H1 (cell line): ENCODE measurements at regions of chr6 and their contacts with region 1.

Region 1: GRCh38 chr6:1786455-1787453 is 177.0 kb downstream of the FOXC1 start:
- DNase-seq: no peak
- H3K4me3 ChIP-seq: no peak overlapping the region
- H3K27ac ChIP-seq: no peak overlapping the region
- H3K4me1 ChIP-seq: no peaks in the 10 kb centered on the region
- H3K27me3 ChIP-seq: no peaks in the 10 kb centered on the region
- CTCF ChIP-seq: no peak
- EP300 ChIP-seq: no peak
- POLR2A ChIP-seq: no peak
- RAD21 ChIP-seq: no peak

Region 2: DNA sequence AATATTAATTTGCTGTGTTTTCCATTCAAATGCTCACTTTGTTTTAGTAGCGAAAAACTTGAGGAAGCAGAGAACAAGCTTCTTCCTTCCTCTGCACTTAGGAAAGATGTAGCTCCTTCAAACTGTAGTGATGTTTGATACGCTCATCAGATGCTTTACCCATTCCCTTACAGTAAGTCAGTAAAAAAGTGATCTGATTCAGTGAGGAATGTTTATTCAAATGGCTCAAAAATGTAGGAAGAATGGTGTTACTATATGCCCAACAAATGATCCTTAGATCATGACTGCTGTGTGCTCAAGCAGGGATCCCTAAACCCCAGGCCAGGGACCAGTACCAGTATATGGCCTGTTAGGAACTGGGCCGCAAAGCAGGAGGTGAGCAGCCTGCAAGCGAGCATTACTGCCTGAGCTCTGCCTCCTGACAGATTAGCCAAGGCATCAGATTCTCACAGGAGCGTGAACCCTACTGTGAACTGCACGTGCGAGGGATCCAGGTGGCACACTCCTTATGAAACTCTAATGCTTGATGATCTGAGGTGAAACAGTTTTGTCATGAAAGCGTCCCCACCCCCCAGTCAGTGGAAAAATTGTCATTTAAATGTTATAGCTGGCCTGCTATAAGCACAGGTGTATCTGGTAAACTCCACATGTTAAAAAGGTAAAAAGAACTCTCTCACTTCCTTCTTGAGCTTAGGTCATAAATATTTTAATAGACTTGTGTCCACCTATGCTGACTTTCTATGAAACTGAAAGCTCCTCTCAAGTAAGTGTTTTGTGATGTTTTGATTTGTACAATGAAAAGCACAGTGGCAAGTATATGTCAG is 10.2 kb after region 1 on chr6:
- CTCF ChIA-PET with region 1: interaction called, 10 read pairs
- POLR2A ChIA-PET with region 1: interaction called, 3 read pairs
- DNase-seq: no peak
- H3K4me3 ChIP-seq: no peak overlapping the region
- H3K27ac ChIP-seq: no peak overlapping the region
- H3K4me1 ChIP-seq: no peaks in the 10 kb centered on the region
- H3K27me3 ChIP-seq: no peaks in the 10 kb centered on the region
- CTCF ChIP-seq: no peak
- EP300 ChIP-seq: no peak
- POLR2A ChIP-seq: no peak
- RAD21 ChIP-seq: no peak